ENCODE measurements at regions of chr2 and their contacts with region 1.

Region 1: DNA sequence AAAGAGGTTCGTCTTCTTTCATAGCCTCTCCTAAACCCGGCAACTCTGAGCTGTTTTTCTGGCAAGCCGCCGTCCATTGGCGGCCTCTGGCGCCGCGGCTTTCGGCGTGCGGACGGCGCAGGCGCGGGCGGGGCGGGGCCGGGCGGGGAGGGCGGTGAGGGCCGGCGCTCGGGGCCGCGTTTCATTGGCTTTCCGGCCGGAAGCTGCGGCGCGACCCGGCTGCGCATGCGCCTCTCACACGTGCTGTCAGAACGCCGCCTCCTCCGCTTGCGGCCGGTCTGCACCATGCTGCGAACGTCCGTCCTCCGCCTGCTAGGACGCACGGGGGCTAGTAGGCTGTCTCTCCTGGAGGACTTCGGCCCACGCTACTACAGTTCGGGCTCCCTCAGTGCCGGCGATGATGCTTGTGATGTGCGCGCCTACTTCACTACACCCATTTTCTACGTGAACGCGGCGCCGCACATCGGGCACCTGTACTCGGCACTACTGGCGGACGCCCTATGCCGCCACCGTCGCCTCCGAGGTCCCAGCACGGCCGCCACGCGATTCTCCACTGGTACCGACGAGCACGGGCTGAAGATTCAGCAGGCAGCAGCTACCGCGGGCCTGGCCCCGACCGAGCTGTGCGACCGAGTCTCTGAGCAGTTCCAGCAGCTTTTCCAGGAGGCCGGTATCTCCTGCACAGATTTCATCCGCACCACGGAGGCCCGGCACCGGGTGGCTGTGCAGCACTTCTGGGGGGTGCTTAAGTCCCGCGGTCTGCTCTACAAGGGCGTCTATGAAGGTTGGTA is at the start of gene MARS2:
- DNase-seq: peak; percentile 88
- H3K4me3 ChIP-seq: peak within 1 kb of the TSS; percentile 69 to 98 (median 76)
- H3K27ac ChIP-seq: peak within 1 kb of the TSS; percentile 41
- H3K4me1 ChIP-seq: peaks cover 25% of the 10 kb centered on the region
- H3K27me3 ChIP-seq: no peaks in the 10 kb centered on the region
- CTCF ChIP-seq: no peak
- total RNA-seq, gene MARS2: 10.0 to 11.2 TPM

Region 2: DNA sequence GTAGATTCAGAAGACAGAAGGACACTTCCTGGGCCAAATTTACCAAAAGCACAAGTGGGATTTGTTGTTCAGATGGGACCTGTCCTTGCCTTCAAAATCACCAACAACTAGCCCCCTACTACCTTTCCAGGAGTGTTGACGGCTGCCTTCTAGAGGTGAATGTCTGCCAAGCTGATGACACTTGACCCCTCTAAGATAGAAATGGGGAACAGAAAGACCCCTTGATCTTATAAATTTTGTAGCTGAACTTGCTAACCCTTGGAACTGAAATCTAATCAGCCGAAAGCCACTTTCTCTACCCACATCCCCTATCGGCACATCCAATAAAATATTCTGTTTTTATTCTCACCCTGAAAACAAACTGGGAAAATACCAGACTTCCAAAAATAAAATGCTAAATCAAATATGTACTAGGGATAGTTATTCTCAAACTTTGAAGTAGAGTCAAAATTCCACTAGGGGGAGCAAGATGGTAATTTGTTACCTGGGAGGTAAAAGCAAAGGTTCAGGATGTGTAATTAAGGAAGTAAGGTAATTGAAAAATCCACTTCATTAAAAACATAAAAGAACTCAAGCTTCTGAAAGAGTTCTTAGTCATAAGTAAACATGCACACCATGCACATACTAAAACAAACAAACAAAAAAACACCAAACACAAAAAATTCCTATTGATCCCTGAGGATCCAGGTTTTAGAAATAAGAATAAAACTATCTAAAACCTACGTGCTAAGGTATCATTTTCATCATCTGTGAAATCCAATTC is 514.0 kb before region 1 on chr2:
- CTCF ChIA-PET with region 1: no interaction called
- dilution Hi-C with region 1: no loop called
- in situ Hi-C with region 1: no loop called
- intact Hi-C with region 1: loop called (anchors 10 kb)
- DNase-seq: peak; percentile 32
- H3K4me3 ChIP-seq: no peak overlapping the region
- H3K27ac ChIP-seq: no peak overlapping the region
- H3K4me1 ChIP-seq: no peaks in the 10 kb centered on the region
- H3K27me3 ChIP-seq: no peaks in the 10 kb centered on the region
- CTCF ChIP-seq: peak; percentile 62 to 67

Region 3: GRCh38 chr2:197777823-197778407 is 72.6 kb after region 1 on chr2:
- CTCF ChIA-PET with region 1: no interaction called
- dilution Hi-C with region 1: no loop called
- in situ Hi-C with region 1: no loop called
- intact Hi-C with region 1: loop called (anchors 1 kb)
- DNase-seq: peak; percentile 4
- H3K4me3 ChIP-seq: no peak overlapping the region
- H3K27ac ChIP-seq: no peak overlapping the region
- H3K4me1 ChIP-seq: no peaks in the 10 kb centered on the region
- H3K27me3 ChIP-seq: no peaks in the 10 kb centered on the region
- CTCF ChIP-seq: peak; percentile 60 to 64

Region 4: GRCh38 chr2:198296665-198297308 is 591.5 kb after region 1 on chr2:
- CTCF ChIA-PET with region 1: no interaction called
- dilution Hi-C with region 1: no loop called
- in situ Hi-C with region 1: no loop called
- intact Hi-C with region 1: loop called (anchors 10 kb)
- DNase-seq: peak; percentile 26
- H3K4me3 ChIP-seq: no peak overlapping the region
- H3K27ac ChIP-seq: no peak overlapping the region
- H3K4me1 ChIP-seq: no peaks in the 10 kb centered on the region
- H3K27me3 ChIP-seq: peaks cover 2% of the 10 kb centered on the region
- CTCF ChIP-seq: peak; percentile 62 to 71